ENCODE measurements at regions of chr1 and their contacts with region 1.

Region 1: GRCh38 chr1:89358287-89358893 is 5.5 kb upstream of the GBP6 start:
- DNase-seq: peak; percentile 95
- H3K4me3 Mint-ChIP-seq: peak overlapping the region; percentile 71
- H3K27ac Mint-ChIP-seq: peak overlapping the region; percentile 63
- H3K4me1 Mint-ChIP-seq: peaks cover 58% of the 10 kb centered on the region
- H3K27me3 Mint-ChIP-seq: peaks cover 7% of the 10 kb centered on the region

Region 2: DNA sequence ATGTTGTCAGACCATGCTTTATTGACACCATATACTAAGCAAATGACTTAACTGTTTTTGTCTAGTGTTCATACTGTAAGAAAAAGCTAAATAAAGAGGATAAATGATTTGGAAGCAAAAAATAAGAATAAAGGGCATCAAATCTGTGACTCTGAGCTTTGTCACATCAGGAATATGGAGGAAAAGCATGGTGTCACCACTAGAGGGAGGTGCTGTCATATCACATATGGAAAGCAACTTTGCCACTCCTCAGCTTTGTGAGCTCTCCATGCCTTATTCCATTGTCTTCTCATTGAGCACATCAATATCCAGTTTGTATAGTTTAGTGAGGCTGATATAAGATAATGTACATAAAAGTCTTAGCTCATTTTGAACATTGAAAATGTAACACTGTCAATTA is 272.6 kb before region 1 on chr1:
- intact Hi-C with region 1: loop called (anchors 1 kb)
- DNase-seq: peak; percentile 89
- H3K4me3 Mint-ChIP-seq: no peak overlapping the region
- H3K27ac Mint-ChIP-seq: no peak overlapping the region
- H3K4me1 Mint-ChIP-seq: peaks cover 12% of the 10 kb centered on the region
- H3K27me3 Mint-ChIP-seq: no peaks in the 10 kb centered on the region

Region 3: DNA sequence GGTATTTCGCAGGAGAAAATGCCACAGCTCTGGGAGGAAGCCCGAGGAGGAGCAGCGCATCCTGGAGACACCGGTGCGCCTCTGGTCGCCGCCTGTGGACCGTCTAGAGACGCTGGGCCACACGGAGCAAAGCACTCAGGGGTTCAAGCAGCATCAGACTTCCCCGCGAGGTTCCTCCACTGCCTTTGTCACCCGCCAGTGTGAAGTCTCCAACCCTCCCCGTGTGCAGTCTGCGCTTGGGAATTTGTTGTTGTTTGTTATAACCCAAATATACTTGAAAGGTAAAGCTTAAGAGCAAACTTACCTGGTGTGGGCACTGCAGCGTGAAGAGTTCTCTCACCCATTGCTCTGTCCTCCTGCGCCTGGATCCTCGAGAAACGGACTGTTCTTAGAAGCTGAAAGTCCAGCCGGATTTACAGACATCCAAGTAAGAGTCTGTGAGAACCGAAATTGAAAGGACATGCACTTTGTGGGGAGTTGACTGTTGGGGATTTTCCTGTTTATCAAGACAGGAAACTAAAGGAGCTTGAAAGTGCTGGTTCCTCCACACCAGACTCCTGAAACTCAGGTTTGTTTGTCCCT is 159.8 kb before region 1 on chr1 and contains the start of gene GBP4:
- intact Hi-C with region 1: loop called (anchors 1 kb)
- DNase-seq: peak; percentile 87
- H3K4me3 Mint-ChIP-seq: peak within 1 kb of the TSS; percentile 91
- H3K27ac Mint-ChIP-seq: peak within 1 kb of the TSS; percentile 96
- H3K4me1 Mint-ChIP-seq: peaks cover 67% of the 10 kb centered on the region
- H3K27me3 Mint-ChIP-seq: no peaks in the 10 kb centered on the region
- total RNA-seq, gene GBP4: 29.5 and 33.5 TPM in 2 replicates

Region 4: DNA sequence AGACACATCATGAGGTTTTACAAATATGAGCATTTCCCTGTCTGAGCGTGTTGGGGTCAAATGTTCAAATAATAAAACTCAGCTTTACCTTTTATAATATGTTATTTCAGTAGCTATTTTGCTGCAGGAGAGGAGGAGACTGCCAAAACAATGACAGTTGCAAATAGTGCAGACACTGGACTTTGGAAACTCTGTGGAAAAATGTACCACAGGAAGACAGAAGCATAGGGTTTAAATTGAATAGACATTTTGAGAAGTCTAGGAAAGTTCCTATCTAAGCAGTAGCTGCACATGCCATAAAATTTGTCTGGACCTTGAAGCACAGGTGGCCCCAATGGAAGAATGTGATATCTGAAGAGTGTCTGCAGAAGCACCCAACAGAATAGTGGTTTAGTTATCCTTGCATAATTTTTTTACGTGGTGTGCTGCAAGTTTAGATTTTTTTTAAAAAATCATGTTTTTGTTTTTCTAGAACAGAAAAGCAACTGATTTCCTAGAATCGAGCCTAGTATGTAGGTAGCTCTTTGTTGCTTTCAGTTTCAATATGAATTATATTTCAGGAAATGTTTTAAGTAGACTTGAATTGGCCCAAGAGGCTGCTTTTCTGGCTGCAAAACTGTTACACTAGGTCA is 71.7 kb before region 1 on chr1:
- intact Hi-C with region 1: loop called (anchors 5 kb)
- DNase-seq: peak; percentile 81
- H3K4me3 Mint-ChIP-seq: peak overlapping the region; percentile 72
- H3K27ac Mint-ChIP-seq: peak overlapping the region; percentile 90
- H3K4me1 Mint-ChIP-seq: peaks cover 67% of the 10 kb centered on the region
- H3K27me3 Mint-ChIP-seq: no peaks in the 10 kb centered on the region

Region 5: DNA sequence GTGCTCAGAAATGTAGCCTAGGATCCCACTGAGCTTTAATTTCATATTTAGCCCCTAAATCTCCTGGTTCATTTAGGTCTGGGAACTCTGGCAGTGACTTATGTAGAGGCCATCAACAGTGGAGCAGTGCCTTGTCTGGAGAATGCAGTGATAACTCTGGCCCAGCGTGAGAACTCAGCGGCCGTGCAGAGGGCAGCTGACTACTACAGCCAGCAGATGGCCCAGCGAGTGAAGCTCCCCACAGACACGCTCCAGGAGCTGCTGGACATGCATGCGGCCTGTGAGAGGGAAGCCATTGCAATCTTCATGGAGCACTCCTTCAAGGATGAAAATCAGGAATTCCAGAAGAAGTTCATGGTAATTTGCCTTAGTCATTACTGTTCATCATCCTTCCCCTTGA is 23.2 kb after region 1 on chr1:
- intact Hi-C with region 1: loop called (anchors 2 kb)
- DNase-seq: no peak
- H3K4me3 Mint-ChIP-seq: no peak overlapping the region
- H3K27ac Mint-ChIP-seq: no peak overlapping the region
- H3K4me1 Mint-ChIP-seq: peaks cover 8% of the 10 kb centered on the region
- H3K27me3 Mint-ChIP-seq: peaks cover 8% of the 10 kb centered on the region

Region 6: DNA sequence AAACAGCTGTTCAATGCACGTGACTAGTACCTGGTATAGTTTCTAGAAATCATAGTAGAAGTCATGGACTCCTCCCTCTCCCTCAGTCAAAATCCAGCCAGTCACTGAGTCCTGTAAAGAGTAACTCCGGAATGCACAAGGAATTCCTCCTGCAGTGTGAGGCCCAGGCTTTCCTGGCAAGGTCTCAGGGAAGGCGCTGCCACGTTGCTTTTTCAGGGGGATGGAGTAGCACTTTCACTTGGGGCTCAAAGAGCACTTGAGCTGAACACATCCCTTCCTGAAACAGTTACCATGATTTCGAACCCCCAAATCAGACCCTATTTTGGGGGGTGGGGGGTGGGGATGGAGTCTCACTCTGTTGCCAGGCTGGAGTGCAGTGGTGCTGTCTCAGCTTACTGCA is 436.0 kb after region 1 on chr1:
- intact Hi-C with region 1: no loop called
- DNase-seq: no peak
- H3K4me3 Mint-ChIP-seq: no peak overlapping the region
- H3K27ac Mint-ChIP-seq: no peak overlapping the region
- H3K4me1 Mint-ChIP-seq: peaks cover 6% of the 10 kb centered on the region
- H3K27me3 Mint-ChIP-seq: no peaks in the 10 kb centered on the region

Measured in activated CD4-positive, alpha-beta T cell treated with anti-CD3 and anti-CD28 coated beads, Interleukin-2, amount 10 ng/mL, durations not matched to agents 24 days and 14 days (primary cell).